ENCODE measurements at regions of chr11 and their contacts with region 1.

Region 1: GRCh38 chr11:2298795-2299761 is 2.6 kb downstream of the C11orf21 start:
- DNase-seq: peak; percentile 42
- H3K4me3 Mint-ChIP-seq: peak overlapping the region; percentile 68
- H3K27ac Mint-ChIP-seq: peak overlapping the region; percentile 11
- H3K4me1 Mint-ChIP-seq: peaks cover 33% of the 10 kb centered on the region
- H3K27me3 Mint-ChIP-seq: peaks cover 11% of the 10 kb centered on the region

Region 2: GRCh38 chr11:2196970-2197770 is 101.9 kb before region 1 on chr11:
- CTCF ChIA-PET with region 1: interaction called, 24 read pairs
- DNase-seq: peak; percentile 83
- H3K4me3 Mint-ChIP-seq: no peak overlapping the region
- H3K27ac Mint-ChIP-seq: no peak overlapping the region
- H3K4me1 Mint-ChIP-seq: no peaks in the 10 kb centered on the region
- H3K27me3 Mint-ChIP-seq: peaks cover 18% of the 10 kb centered on the region

Region 3: GRCh38 chr11:2400069-2400760 is 101.1 kb after region 1 on chr11 and contains the start of gene TSSC4:
- CTCF ChIA-PET with region 1: interaction called, 13 read pairs
- DNase-seq: peak; percentile 99
- H3K4me3 Mint-ChIP-seq: peak within 1 kb of the TSS; percentile 88
- H3K27ac Mint-ChIP-seq: peak within 1 kb of the TSS; percentile 90
- H3K4me1 Mint-ChIP-seq: peaks cover 14% of the 10 kb centered on the region
- H3K27me3 Mint-ChIP-seq: peaks cover 7% of the 10 kb centered on the region

Measured in activated naive CD4-positive, alpha-beta T cell treated with anti-CD3 and anti-CD28 coated beads, Interleukin-2, amount 10 ng/mL, durations not matched to agents 7 days and 5 days (primary cell).